ENCODE measurements at regions of chr4 and their contacts with region 1.

Region 1: DNA sequence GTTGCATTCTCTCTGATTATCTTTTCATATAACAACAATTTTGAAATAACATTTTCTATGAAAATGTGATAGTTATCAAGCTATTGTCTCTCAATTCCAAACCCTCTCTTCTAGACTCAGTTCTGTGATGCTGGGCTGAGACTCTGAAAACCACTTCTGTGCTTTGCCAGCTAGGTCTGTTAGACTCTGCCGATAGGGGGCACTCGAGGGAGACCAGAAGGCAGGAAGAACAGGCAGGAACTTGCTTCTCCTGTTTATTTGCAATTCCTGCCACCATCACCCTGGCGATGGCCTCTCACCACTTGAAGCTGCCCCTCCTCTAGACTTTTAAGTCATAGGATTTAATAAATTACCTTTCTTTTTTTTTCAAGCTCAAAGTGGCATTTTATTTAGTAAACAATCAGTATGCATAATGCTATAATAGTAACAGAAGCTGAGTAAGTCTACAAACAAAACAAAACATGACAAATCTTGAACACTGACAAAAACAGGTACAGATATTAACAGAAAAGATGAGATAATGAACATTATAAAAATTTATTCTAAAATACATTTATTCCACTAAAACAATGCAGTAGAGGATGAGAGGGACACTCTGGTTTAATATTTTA is 49.7 kb downstream of the RASL11B start:
- DNase-seq: peak; percentile 81
- ATAC-seq: peak; percentile 70
- H3K4me3 Mint-ChIP-seq: no peak overlapping the region
- H3K27ac Mint-ChIP-seq: no peak overlapping the region
- H3K4me1 Mint-ChIP-seq: peaks cover 4% of the 10 kb centered on the region
- H3K27me3 Mint-ChIP-seq: no peaks in the 10 kb centered on the region

Region 2: GRCh38 chr4:52894443-52894842 is 17.3 kb before region 1 on chr4:
- CTCF ChIA-PET with region 1: interaction called, 10 read pairs
- POLR2A ChIA-PET with region 1: no interaction called
- DNase-seq: peak; percentile 47
- ATAC-seq: peak; percentile 44
- H3K4me3 Mint-ChIP-seq: no peak overlapping the region
- H3K27ac Mint-ChIP-seq: no peak overlapping the region
- H3K4me1 Mint-ChIP-seq: peaks cover 35% of the 10 kb centered on the region
- H3K27me3 Mint-ChIP-seq: no peaks in the 10 kb centered on the region

Region 3: GRCh38 chr4:52925531-52925968 is 13.8 kb after region 1 on chr4:
- CTCF ChIA-PET with region 1: interaction called, 15 read pairs
- POLR2A ChIA-PET with region 1: no interaction called
- DNase-seq: no peak
- ATAC-seq: no peak
- H3K4me3 Mint-ChIP-seq: no peak overlapping the region
- H3K27ac Mint-ChIP-seq: no peak overlapping the region
- H3K4me1 Mint-ChIP-seq: no peaks in the 10 kb centered on the region
- H3K27me3 Mint-ChIP-seq: no peaks in the 10 kb centered on the region

Region 4: GRCh38 chr4:52996261-52996892 is 84.6 kb after region 1 on chr4:
- CTCF ChIA-PET with region 1: no interaction called
- POLR2A ChIA-PET with region 1: no interaction called
- DNase-seq: no peak
- ATAC-seq: no peak
- H3K4me3 Mint-ChIP-seq: no peak overlapping the region
- H3K27ac Mint-ChIP-seq: no peak overlapping the region
- H3K4me1 Mint-ChIP-seq: peaks cover 6% of the 10 kb centered on the region
- H3K27me3 Mint-ChIP-seq: no peaks in the 10 kb centered on the region